CD4-positive, alpha-beta memory T cell (primary cell): ENCODE measurements at regions of chr9 and their contacts with region 1.

Region 1: GRCh38 chr9:92954049-92954861 is 6.9 kb downstream of the FGD3 start:
- DNase-seq: peak; percentile 87 to 95 (median 90)
- H3K4me3 ChIP-seq: peak overlapping the region; percentile 49 to 57
- H3K4me3 Mint-ChIP-seq: peak overlapping the region; percentile 86 to 92 (median 88)
- H3K27ac ChIP-seq: peak overlapping the region; percentile 75
- H3K27ac Mint-ChIP-seq: peak overlapping the region; percentile 89 to 100 (median 99)
- H3K4me1 ChIP-seq: peaks cover 91% of the 10 kb centered on the region
- H3K4me1 Mint-ChIP-seq: peaks cover 65 to 91% (median 78%) of the 10 kb centered on the region in 4 donors
- H3K27me3 ChIP-seq: no peaks in the 10 kb centered on the region
- H3K27me3 Mint-ChIP-seq: no peaks in the 10 kb centered on the region

Region 2: DNA sequence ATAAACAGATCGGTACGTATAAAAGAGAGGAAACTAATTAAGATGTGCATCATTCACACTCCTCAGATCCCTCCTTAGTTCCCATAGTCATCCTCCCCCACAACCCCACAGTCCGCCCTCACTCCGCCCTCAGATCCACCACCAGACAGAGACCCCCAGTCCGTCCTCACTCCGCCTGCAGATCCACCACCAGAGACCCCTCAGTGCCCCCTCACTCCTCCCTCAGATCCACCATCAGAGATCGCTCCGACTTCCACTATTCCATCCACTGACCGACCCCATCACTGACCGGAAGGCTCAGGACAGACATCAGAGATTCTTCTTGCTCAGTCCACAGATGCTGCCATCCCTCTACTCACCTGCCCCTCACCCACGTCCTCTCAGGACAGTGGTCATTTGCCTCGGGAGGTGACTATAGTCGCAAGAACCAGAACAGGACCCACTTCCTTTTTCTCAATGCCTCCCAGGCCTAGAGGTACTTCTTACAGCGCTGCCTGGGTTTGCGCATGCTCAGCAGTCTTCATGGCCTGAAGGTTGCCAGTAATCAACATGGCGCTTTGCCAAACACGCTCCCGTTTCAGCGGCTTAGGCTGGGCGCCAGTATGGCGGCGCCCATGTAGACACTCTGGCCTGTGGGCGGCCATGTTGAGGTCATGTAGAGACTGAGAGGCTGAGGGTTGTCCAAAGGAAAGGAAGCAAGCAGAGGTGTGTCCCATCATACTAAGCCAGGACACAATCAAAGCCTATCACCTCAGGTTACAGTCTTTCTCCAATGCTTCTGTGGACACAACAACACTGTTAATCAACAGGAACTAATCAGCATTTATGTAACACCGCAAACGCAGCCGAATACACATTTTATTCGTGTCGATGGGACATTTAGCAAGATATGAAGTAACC is 76.5 kb before region 1 on chr9 and contains the start of gene ZNF484:
- CTCF ChIA-PET with region 1: interaction called, 3 read pairs
- POLR2A ChIA-PET with region 1: interaction called, 3 read pairs
- intact Hi-C with region 1: loop called (anchors 1 kb)
- DNase-seq: peak; percentile 94 to 97 (median 95)
- H3K4me3 ChIP-seq: peak within 1 kb of the TSS; percentile 81 to 97
- H3K4me3 Mint-ChIP-seq: peak within 1 kb of the TSS; percentile 87 to 100 (median 99)
- H3K27ac ChIP-seq: peak within 1 kb of the TSS; percentile 94
- H3K27ac Mint-ChIP-seq: peak within 1 kb of the TSS; percentile 96 to 100 (median 99)
- H3K4me1 ChIP-seq: peaks cover 35% of the 10 kb centered on the region
- H3K4me1 Mint-ChIP-seq: peaks cover 30 to 48% (median 40%) of the 10 kb centered on the region in 4 donors
- H3K27me3 ChIP-seq: no peaks in the 10 kb centered on the region
- H3K27me3 Mint-ChIP-seq: no peaks in the 10 kb centered on the region
- total RNA-seq, gene ZNF484: 22.6 to 24.7 TPM

Region 3: DNA sequence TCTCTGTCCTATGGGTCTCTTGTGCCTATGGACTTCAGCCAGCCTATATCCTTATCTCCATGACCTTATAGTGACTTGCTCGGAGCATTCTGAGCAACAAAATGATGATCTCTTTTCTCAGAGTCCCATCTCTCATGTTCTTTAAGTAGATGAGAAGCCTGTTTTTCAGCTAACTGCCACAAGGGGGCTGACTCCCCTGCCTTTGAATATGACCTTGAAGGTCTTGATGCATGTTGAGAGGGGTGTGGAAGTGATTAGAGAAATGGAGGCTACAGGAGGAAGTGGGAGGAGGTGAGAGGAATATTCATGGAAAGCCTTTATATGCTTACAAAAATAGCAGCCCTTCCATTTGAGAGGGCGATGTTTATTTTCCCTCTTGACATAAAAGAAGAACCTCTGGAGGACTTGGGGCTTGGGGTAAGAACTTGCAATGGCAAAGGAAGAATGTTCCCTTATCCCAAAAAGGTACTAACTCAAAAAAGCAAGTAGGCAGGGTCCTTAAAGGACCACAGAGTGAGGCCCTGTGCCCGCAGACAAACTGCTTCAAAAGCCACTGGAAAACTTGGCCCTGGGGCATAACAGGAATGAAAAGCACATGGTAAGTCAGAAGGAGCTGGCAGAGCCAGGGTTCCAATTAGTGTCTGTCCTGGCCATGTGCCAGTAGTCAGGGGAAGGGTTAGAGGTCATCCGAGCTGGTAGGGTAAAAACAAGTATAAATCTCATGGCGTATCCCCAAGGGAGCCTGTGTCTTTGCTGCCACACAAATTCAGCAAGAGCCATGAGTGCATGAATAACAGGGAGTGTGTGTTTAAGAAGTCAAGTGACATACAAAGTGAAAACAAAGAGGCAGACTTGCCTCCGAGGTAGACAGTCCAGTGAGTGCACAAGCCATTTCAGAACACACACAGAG is 32.2 kb after region 1 on chr9:
- CTCF ChIA-PET with region 1: interaction called, 21 read pairs
- POLR2A ChIA-PET with region 1: interaction called, 8 read pairs
- intact Hi-C with region 1: loop called (anchors 1 kb)
- DNase-seq: peak; percentile 50 to 72 (median 62)
- H3K4me3 ChIP-seq: no peak overlapping the region
- H3K4me3 Mint-ChIP-seq: peak overlapping the region in 7 of 8 donors; percentile 8 to 78 (median 43)
- H3K27ac ChIP-seq: peak overlapping the region; percentile 38
- H3K27ac Mint-ChIP-seq: peak overlapping the region; percentile 61 to 93 (median 87)
- H3K4me1 ChIP-seq: peaks cover 87% of the 10 kb centered on the region
- H3K4me1 Mint-ChIP-seq: peaks cover 62 to 95% (median 76%) of the 10 kb centered on the region in 4 donors
- H3K27me3 ChIP-seq: no peaks in the 10 kb centered on the region
- H3K27me3 Mint-ChIP-seq: no peaks in the 10 kb centered on the region

Region 4: DNA sequence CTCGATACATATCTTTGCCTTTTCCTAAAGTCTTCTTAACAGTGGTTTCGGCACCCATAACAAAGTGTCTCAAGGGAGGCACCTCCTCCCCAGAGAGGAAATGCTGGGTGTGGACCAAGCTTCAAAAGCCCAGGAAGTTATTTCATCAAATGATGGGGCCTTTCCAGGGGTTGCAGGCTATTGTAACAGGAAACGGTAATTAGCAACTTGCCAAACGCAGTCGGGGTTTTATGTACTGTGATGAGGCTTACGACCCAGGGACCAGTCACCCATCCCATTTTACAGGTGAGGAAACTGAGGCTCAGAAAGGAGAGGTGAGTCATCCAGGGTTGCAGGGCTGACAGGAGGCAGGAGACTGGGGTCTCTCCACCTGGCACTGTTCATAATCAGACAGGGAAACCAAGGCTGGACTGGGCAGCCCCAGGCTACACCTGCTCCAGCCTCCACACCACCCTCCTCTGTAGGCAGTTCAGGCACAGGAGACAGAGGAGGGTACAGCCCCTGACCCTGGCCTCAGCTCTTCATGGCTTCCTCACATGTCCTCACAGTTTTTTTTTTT is 74.3 kb after region 1 on chr9:
- CTCF ChIA-PET with region 1: interaction called, 16 read pairs
- POLR2A ChIA-PET with region 1: interaction called, 16 read pairs
- intact Hi-C with region 1: no loop called
- DNase-seq: peak; percentile 84 to 94 (median 89)
- H3K4me3 ChIP-seq: peak overlapping the region; percentile 52 to 55
- H3K4me3 Mint-ChIP-seq: peak overlapping the region; percentile 82 to 90 (median 86)
- H3K27ac ChIP-seq: peak overlapping the region; percentile 91
- H3K27ac Mint-ChIP-seq: peak overlapping the region; percentile 94 to 99 (median 96)
- H3K4me1 ChIP-seq: peaks cover 95% of the 10 kb centered on the region
- H3K4me1 Mint-ChIP-seq: peaks cover 43 to 95% (median 78%) of the 10 kb centered on the region in 4 donors
- H3K27me3 ChIP-seq: no peaks in the 10 kb centered on the region
- H3K27me3 Mint-ChIP-seq: no peaks in the 10 kb centered on the region

Region 5: DNA sequence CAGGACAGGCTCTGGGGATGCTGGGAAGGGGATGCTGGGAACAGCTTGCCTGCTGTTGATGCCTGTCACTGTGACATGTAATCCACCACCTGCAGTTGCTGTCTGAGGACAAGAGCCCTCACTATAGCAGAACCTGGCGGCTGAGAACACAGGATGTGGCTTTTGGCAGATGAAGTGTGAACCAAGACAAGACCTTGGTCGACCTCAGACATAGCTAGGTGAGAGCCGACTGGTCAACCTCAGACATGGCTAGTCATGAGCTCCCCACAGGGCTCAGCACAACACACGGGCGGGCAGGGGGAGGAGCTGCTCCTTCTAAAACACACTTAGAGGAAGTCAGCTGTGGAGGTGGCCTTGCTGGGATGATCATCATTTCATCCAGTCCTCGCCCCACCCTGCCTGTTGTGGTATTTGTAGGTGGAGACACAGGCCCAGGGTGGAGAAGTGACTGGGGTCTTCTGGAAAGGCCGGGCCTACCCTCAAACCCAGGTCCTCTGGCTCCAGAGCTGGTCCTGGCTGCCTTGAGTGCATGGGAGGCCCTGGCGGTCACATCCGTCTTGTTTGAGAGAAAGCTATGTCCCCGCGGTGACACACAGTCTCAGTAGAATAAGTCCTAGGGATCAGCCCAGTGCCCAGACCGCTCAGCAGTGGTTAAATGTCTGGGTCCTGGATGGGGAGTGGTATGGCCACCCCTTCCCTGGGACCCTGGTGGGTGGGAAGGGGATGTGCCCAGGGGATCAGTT is 110.3 kb after region 1 on chr9:
- CTCF ChIA-PET with region 1: interaction called, 7 read pairs
- POLR2A ChIA-PET with region 1: interaction called, 21 read pairs
- intact Hi-C with region 1: loop called (anchors 2 kb)
- DNase-seq: peak; percentile 90 to 96 (median 92)
- H3K4me3 ChIP-seq: peak overlapping the region in 1 of 2 donors; percentile 47
- H3K4me3 Mint-ChIP-seq: peak overlapping the region; percentile 87 to 95 (median 91)
- H3K27ac ChIP-seq: peak overlapping the region; percentile 72
- H3K27ac Mint-ChIP-seq: peak overlapping the region; percentile 96 to 100 (median 99)
- H3K4me1 ChIP-seq: peaks cover 98% of the 10 kb centered on the region
- H3K4me1 Mint-ChIP-seq: peaks cover 68 to 97% (median 82%) of the 10 kb centered on the region in 4 donors
- H3K27me3 ChIP-seq: no peaks in the 10 kb centered on the region
- H3K27me3 Mint-ChIP-seq: no peaks in the 10 kb centered on the region

Region 6: DNA sequence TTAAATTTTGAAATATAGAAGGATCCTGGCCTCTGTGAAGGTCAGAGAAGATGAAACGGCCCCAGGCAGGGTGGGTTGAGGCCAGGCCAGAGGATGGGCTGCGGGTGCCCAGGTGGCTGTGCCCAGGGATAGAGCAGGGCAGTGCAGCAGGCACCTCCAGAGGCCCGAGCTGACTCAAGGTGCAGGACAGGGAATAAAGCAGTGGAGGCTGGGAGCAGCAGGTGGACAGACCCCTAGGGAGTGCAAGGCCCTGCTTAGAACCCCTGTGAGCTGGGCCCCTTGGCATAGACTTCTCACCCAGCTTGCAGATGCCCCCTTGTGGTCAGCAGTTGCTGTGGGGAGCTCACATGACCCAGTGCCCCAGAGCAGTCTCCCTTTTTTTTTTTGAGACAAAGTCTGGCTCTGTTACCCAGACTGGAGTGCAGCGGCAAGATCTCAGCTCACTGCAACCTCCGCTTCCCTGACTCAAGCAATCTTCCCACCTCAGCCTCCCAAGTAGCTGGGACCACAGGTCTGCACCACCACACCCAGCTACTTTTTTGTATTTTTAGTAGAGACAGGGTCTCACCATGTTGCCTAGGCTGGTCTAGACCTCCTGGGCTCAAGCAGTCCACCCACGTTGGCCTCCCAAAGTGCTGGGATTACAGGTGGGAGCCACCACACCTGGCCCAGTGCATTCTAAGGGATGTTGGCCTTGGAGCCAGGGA is 348.4 kb after region 1 on chr9:
- CTCF ChIA-PET with region 1: interaction called, 8 read pairs
- POLR2A ChIA-PET with region 1: interaction called, 4 read pairs
- intact Hi-C with region 1: loop called (anchors 1 kb)
- DNase-seq: peak; percentile 46 to 62 (median 57)
- H3K4me3 ChIP-seq: no peak overlapping the region
- H3K4me3 Mint-ChIP-seq: no peak overlapping the region
- H3K27ac ChIP-seq: no peak overlapping the region
- H3K27ac Mint-ChIP-seq: peak overlapping the region in 1 of 7 donors; percentile 65
- H3K4me1 ChIP-seq: no peaks in the 10 kb centered on the region
- H3K4me1 Mint-ChIP-seq: peaks cover 0 to 4% (median 0%) of the 10 kb centered on the region in 4 donors
- H3K27me3 ChIP-seq: no peaks in the 10 kb centered on the region
- H3K27me3 Mint-ChIP-seq: no peaks in the 10 kb centered on the region